Esophagus muscularis mucosa (tissue), 4 donors: ENCODE measurements at regions of chr3 and their contacts with region 1.

Region 1: DNA sequence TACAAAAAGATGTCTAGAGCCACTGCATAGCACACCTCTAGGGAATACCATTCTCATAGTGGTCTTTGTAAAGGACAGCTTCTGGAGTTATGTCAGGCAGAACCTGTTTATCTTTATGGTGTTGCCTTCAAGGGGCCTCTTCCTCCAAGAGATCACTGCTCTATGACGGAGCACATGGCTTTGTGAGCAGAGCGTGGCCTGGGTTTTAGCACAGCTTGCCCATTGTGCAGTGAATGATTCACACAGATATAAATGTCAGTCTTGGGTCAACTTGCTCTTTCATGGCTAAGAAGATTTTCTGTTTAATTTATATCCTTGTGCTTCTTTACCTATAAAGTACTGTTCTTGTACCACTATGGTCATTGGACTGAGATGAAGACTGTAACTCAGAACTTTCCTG is 41.5 kb upstream of the RBMS3 start:
- DNase-seq: no peak
- H3K4me3 ChIP-seq: no peak overlapping the region
- H3K27ac ChIP-seq: no peak overlapping the region
- H3K4me1 ChIP-seq: peaks cover 0 to 5% (median 0%) of the 10 kb centered on the region in 4 donors
- H3K27me3 ChIP-seq: no peaks in the 10 kb centered on the region
- CTCF ChIP-seq: no peak
- EP300 ChIP-seq: no peak
- POLR2A ChIP-seq: no peak

Region 2: GRCh38 chr3:29065211-29065785 is 174.1 kb before region 1 on chr3:
- intact Hi-C with region 1: loop called (anchors 10 kb)
- DNase-seq: no peak
- H3K4me3 ChIP-seq: no peak overlapping the region
- H3K27ac ChIP-seq: peak overlapping the region; percentile 32 to 57 (median 49)
- H3K4me1 ChIP-seq: peaks cover 10 to 23% (median 18%) of the 10 kb centered on the region in 4 donors
- H3K27me3 ChIP-seq: no peaks in the 10 kb centered on the region
- CTCF ChIP-seq: no peak
- EP300 ChIP-seq: no peak
- POLR2A ChIP-seq: no peak

Region 3: DNA sequence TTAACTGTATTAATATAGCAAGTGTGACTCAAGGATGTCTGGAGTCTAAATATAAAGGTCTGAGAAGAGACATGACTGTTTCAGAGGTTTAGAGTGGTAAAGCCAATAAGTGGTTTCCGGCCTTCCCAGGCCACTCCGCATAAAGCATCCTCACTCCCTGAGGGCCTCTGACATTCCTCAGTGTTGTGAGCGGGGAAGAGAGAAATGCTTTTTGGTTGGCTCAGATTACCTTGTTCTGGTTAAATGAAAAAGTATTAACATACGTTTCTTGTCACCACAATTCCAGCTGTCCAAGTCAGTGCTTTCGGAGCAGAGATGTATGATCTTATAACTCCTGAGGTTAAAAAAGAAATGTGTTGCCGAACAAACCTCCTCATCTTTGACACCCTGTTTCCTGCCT is 145.3 kb after region 1 on chr3:
- intact Hi-C with region 1: no loop called
- DNase-seq: no peak
- H3K4me3 ChIP-seq: no peak overlapping the region
- H3K27ac ChIP-seq: peak overlapping the region; percentile 51 to 67 (median 57)
- H3K4me1 ChIP-seq: peaks cover 12 to 41% (median 30%) of the 10 kb centered on the region in 4 donors
- H3K27me3 ChIP-seq: no peaks in the 10 kb centered on the region
- CTCF ChIP-seq: no peak
- EP300 ChIP-seq: no peak
- POLR2A ChIP-seq: no peak